Activated T-helper 1 cell treated with anti-CD3 and anti-CD28 coated beads, Interleukin-12 subunit alpha, Interleukin-12 subunit beta, Interleukin-2, Interleukin-4 antibody, amounts not matched to agents 30 ng/mL and 10 ng/mL and 1 ng/mL, durations not matched to agents 14 hours and 24 hours and 36 hours (primary cell): ENCODE measurements at regions of chr5 and their contacts with region 1.

Region 1: GRCh38 chr5:1344975-1345838 is at the start of gene CLPTM1L:
- DNase-seq: peak; percentile 87
- H3K4me3 Mint-ChIP-seq: peak within 1 kb of the TSS; percentile 90
- H3K27ac Mint-ChIP-seq: peak within 1 kb of the TSS; percentile 89
- H3K4me1 Mint-ChIP-seq: peaks cover 29% of the 10 kb centered on the region
- H3K27me3 Mint-ChIP-seq: no peaks in the 10 kb centered on the region
- total RNA-seq, gene CLPTM1L: 132 and 133 TPM in 2 replicates

Region 2: GRCh38 chr5:1294835-1295649 is 50.2 kb before region 1 on chr5 and contains the start of gene TERT:
- intact Hi-C with region 1: loop called (anchors 1 kb)
- DNase-seq: peak; percentile 63
- H3K4me3 Mint-ChIP-seq: peak within 1 kb of the TSS; percentile 72
- H3K27ac Mint-ChIP-seq: no peak within 1 kb of the TSS
- H3K4me1 Mint-ChIP-seq: peaks cover 5% of the 10 kb centered on the region
- H3K27me3 Mint-ChIP-seq: peaks cover 5% of the 10 kb centered on the region
- total RNA-seq, gene TERT: 12.3 and 12.5 TPM in 2 replicates

Region 3: GRCh38 chr5:1380011-1380817 is 35.0 kb after region 1 on chr5:
- intact Hi-C with region 1: loop called (anchors 1 kb)
- DNase-seq: peak; percentile 48
- H3K4me3 Mint-ChIP-seq: peak overlapping the region; percentile 58
- H3K27ac Mint-ChIP-seq: peak overlapping the region; percentile 67
- H3K4me1 Mint-ChIP-seq: peaks cover under 1% of the 10 kb centered on the region
- H3K27me3 Mint-ChIP-seq: peaks cover 2% of the 10 kb centered on the region